Body of pancreas (tissue), 4 donors: ENCODE measurements at regions of chr19 and their contacts with region 1.

Region 1: DNA sequence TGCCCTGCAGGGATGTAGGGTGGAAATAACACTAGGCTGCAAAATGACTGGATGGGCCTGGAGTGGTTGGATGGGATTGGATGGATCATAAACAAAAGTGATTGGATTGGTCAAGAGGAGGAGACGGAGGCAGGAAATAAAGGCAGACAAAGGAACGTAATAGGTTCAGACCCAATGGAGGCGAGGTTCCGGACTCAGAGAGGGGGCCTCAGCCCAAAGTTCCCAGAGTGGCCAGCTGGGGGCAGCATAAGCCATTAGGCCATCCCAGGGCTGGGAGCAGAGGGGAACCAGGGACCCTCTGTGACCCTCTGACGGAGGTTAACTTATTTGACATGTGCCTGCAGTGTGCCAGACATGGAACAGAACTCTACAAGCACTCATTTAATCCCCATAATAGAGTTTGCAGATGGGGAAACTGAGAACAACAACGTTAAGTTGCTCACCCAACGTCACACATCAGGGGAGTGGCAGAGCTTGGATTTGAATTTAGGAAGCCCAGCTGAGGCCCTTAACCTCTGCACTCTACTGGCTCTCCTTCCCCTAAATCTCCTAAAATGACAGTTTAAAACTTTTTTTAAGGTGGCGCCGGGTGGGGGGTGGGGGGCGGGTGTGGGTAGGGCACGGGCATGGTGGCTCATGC is 15.3 kb upstream of the MAP1S start:
- DNase-seq: peak; percentile 31 to 65 (median 52)
- ATAC-seq: peak; percentile 65
- H3K4me3 ChIP-seq: no peak overlapping the region
- H3K27ac ChIP-seq: no peak overlapping the region
- H3K4me1 ChIP-seq: no peaks in the 10 kb centered on the region
- H3K27me3 ChIP-seq: no peaks in the 10 kb centered on the region
- CTCF ChIP-seq: peak; percentile 51 to 75 (median 62)
- POLR2A ChIP-seq: no peak

Region 2: GRCh38 chr19:17775245-17775916 is 71.4 kb after region 1 on chr19:
- intact Hi-C with region 1: no loop called
- DNase-seq: peak in 2 of 4 donors; percentile 25 to 44
- ATAC-seq: no peak
- H3K4me3 ChIP-seq: no peak overlapping the region
- H3K27ac ChIP-seq: no peak overlapping the region
- H3K4me1 ChIP-seq: peaks cover 6% of the 10 kb centered on the region
- H3K27me3 ChIP-seq: no peaks in the 10 kb centered on the region
- CTCF ChIP-seq: peak in 6 of 7 experiments; percentile 17 to 37 (median 22)
- POLR2A ChIP-seq: no peak

Region 3: DNA sequence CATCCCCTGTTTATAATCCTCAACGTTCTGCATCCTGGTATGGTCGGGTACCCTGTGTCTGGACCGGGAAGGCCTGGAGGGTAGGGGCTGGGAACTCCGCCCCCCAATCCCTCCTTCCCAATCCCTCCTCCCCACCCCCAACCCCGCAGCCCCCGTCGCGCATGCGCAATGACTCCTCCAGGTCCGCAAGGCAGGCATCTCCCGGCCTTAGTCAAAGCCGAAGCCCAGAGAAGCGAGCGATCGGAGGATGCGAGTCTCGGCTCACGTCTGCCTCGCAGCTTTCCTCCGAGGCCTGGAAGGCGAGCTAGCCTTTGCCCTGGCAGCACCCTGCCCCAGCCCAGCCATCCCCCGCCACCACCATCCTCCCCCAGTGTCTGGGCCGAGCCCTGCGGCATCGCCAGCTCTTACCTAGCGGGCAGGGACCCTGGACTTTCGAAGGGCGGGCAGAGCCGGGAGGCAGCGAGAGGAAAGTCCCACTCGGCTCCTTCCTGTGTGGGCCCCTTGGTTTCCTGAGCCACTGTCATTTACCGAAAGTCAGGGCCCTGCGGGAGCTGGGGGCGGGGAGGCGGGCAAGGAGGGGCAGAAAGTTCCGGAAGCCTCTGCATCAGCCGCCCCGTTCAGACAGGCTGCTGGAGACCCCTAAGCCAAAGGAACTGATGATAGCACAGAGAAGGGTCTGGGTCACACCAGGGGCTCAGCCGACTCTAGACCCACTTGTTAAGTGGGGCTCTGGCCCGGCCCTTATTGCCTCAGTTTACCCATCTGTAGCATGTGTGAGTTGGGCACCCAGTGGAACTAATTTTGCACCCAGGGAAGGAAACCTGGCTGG is 143.8 kb after region 1 on chr19 and contains the start of gene JAK3:
- intact Hi-C with region 1: loop called (anchors 10 kb)
- DNase-seq: peak in 3 of 4 donors; percentile 29 to 50 (median 43)
- ATAC-seq: peak; percentile 39
- H3K4me3 ChIP-seq: no peak within 1 kb of the TSS
- H3K27ac ChIP-seq: peak within 1 kb of the TSS in 3 of 4 donors; percentile 49 to 77 (median 55)
- H3K4me1 ChIP-seq: peaks cover 5% of the 10 kb centered on the region
- H3K27me3 ChIP-seq: no peaks in the 10 kb centered on the region
- CTCF ChIP-seq: no peak
- POLR2A ChIP-seq: peak in 1 of 3 donors; percentile 33
- total RNA-seq, gene JAK3: 2.0 to 3.1 TPM